ENCODE measurements at regions of chr12 and their contacts with region 1.

Region 1: GRCh38 chr12:64801381-64801780 is 23.1 kb upstream of the TBC1D30 start:
- DNase-seq: no peak
- ATAC-seq: peak; percentile 61
- H3K4me3 Mint-ChIP-seq: no peak overlapping the region
- H3K27ac Mint-ChIP-seq: no peak overlapping the region
- H3K4me1 Mint-ChIP-seq: no peaks in the 10 kb centered on the region
- H3K27me3 Mint-ChIP-seq: peaks cover 4% of the 10 kb centered on the region; the same call in 1 of the 2 replicates
- CTCF ChIP-seq: no peak

Region 2: DNA sequence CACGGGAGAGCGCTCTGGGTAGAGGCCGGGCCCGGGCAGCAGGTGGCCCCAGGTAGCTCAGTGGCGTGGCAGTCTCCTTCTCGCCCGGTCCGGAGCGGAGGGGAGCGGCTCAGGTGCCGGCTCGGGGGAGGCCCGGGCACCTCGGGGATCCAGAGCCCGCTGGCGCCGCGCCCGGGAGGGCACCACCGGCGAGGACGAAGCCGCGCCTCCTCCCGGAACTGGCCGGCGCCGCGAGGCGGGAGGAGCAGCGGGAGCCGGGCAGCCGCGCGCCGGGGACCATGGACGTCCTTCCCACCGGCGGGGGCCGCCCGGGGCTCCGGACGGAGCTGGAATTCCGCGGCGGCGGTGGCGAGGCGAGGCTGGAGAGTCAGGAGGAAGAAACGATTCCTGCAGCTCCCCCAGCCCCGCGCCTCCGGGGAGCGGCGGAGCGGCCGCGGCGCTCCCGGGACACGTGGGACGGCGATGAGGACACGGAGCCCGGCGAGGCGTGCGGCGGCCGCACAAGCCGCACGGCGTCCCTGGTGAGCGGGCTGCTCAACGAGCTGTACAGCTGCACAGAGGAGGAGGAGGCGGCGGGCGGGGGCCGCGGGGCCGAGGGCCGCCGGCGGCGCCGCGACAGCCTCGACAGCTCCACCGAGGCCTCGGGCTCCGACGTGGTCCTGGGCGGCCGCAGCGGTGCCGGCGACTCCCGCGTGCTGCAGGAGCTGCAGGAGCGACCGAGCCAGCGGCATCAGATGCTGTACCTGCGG is 20.7 kb before region 1 on chr12:
- CTCF ChIA-PET with region 1: interaction called, 40 read pairs
- POLR2A ChIA-PET with region 1: no interaction called
- DNase-seq: peak; percentile 53
- ATAC-seq: peak; percentile 74
- H3K4me3 Mint-ChIP-seq: peak overlapping the region; percentile 86
- H3K27ac Mint-ChIP-seq: no peak overlapping the region
- H3K4me1 Mint-ChIP-seq: peaks cover 11% of the 10 kb centered on the region
- H3K27me3 Mint-ChIP-seq: peaks cover 76% of the 10 kb centered on the region
- CTCF ChIP-seq: no peak

Region 3: GRCh38 chr12:64836862-64837261 is 35.5 kb after region 1 on chr12:
- CTCF ChIA-PET with region 1: interaction called, 12 read pairs
- POLR2A ChIA-PET with region 1: no interaction called
- DNase-seq: no peak
- ATAC-seq: no peak
- H3K4me3 Mint-ChIP-seq: no peak overlapping the region
- H3K27ac Mint-ChIP-seq: no peak overlapping the region
- H3K4me1 Mint-ChIP-seq: peaks cover 8% of the 10 kb centered on the region
- H3K27me3 Mint-ChIP-seq: no peaks in the 10 kb centered on the region
- CTCF ChIP-seq: no peak

Region 4: DNA sequence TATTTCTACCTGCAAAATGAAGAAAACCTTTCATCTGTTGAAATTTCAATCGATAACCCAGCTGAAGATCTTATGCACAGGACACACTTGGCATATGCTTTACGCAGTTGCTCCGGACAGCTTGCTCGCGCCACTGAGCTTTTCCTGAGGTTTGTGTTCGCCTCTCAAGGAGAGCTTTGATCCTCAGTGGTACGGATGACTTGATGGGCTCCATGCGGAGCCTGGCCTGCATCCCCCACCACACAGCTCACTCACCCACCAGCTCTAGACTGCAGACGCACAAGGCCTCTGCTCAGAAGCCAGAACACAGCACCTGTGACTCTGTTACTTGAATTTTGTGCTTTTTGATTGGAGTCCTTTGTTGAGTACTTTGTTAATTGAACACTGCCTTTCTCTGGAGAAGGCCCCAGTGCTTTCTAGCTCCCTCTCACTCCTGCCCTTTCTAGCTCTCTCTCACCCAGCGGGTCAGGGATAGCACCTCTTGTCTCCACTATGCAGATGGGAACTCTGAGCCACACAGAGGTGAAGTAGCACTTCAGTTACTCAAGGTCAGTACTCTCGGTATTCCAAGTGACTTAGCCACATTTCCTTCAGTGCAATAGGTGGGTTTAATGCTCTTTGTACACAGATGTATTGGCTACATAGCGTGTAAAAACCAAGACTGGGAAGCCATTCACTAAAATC is 75.1 kb after region 1 on chr12:
- CTCF ChIA-PET with region 1: interaction called, 23 read pairs
- POLR2A ChIA-PET with region 1: no interaction called
- DNase-seq: no peak
- ATAC-seq: no peak
- H3K4me3 Mint-ChIP-seq: no peak overlapping the region
- H3K27ac Mint-ChIP-seq: no peak overlapping the region
- H3K4me1 Mint-ChIP-seq: no peaks in the 10 kb centered on the region; the same call in 1 of the 2 replicates
- H3K27me3 Mint-ChIP-seq: peaks cover 5% of the 10 kb centered on the region; the same call in 1 of the 2 replicates
- CTCF ChIP-seq: no peak

Region 5: DNA sequence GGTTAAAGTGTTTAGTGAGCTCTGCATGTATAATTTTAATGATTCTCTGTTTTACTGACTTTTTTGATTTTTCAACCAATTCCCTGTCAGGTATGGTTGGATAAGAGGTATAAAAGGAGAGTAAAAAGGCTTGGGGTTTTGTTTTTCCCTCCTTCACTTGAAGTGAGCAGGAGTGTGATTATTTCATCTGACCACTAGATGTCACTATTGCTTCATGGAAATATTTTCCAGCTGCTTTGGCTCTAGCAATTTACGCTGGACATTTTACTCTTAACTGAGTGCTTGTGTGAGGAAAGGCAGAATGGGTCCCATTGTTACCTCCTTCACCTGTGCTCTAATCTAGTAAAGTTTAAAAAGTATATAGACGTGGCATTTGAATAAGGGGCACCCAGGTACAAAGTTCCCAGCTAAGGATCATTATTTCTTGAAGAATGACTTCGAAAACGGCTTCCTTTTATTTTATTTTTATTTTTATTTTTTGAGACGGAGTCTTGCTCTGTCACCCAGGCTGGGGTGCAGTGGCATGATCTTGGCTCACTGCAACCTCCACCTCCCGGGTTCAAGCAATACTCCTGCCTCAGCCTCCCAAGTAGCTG is 89.6 kb after region 1 on chr12:
- CTCF ChIA-PET with region 1: interaction called, 33 read pairs
- POLR2A ChIA-PET with region 1: no interaction called
- DNase-seq: no peak
- ATAC-seq: peak; percentile 38
- H3K4me3 Mint-ChIP-seq: no peak overlapping the region
- H3K27ac Mint-ChIP-seq: no peak overlapping the region
- H3K4me1 Mint-ChIP-seq: peaks cover 29% of the 10 kb centered on the region
- H3K27me3 Mint-ChIP-seq: peaks cover 48% of the 10 kb centered on the region
- CTCF ChIP-seq: peak; percentile 70

Region 6: DNA sequence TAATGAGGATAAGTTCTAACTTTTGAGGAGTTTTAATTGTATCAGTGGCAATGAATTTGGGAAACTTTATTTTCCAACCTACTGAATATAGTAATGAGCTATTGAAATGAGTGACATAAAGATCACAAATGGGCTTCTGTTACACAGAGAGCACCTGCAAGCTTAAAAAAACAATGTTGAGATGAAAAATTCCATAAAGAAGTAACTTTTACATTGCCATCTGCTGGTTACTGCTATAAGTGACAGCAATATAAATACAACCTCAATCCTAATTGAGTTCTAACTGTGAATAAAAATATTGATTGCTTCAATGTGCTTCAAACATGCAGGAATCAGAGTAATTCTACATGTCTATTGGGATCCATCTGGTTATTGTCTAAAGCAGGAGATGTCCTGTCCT is 305.6 kb after region 1 on chr12:
- CTCF ChIA-PET with region 1: interaction called, 14 read pairs
- POLR2A ChIA-PET with region 1: no interaction called
- DNase-seq: no peak
- ATAC-seq: no peak
- H3K4me3 Mint-ChIP-seq: no peak overlapping the region
- H3K27ac Mint-ChIP-seq: no peak overlapping the region
- H3K4me1 Mint-ChIP-seq: peaks cover 9% of the 10 kb centered on the region
- H3K27me3 Mint-ChIP-seq: peaks cover 2% of the 10 kb centered on the region; the same call in 1 of the 2 replicates
- CTCF ChIP-seq: no peak

Region 7: GRCh38 chr12:65121049-65121955 is 319.9 kb after region 1 on chr12 and contains the start of gene WIF1:
- CTCF ChIA-PET with region 1: interaction called, 23 read pairs
- POLR2A ChIA-PET with region 1: no interaction called
- DNase-seq: peak; percentile 76
- ATAC-seq: peak; percentile 86
- H3K4me3 Mint-ChIP-seq: peak within 1 kb of the TSS; percentile 55
- H3K27ac Mint-ChIP-seq: no peak within 1 kb of the TSS
- H3K4me1 Mint-ChIP-seq: peaks cover 5% of the 10 kb centered on the region; the same call in 1 of the 2 replicates
- H3K27me3 Mint-ChIP-seq: peaks cover 52% of the 10 kb centered on the region
- CTCF ChIP-seq: peak; percentile 88
- total RNA-seq, gene WIF1: 0.69 to 1.8 TPM (median 1.5 TPM) in 3 replicates

Measured in WTC11 (cell line).